Activated naive CD4-positive, alpha-beta T cell treated with anti-CD3 and anti-CD28 coated beads for 36 hours (primary cell): ENCODE measurements at regions of chr11 and their contacts with region 1.

Region 1: GRCh38 chr11:128482512-128483191 is 104.7 kb downstream of the ETS1 start:
- DNase-seq: peak; percentile 72
- H3K4me3 Mint-ChIP-seq: peak overlapping the region; percentile 68
- H3K27ac Mint-ChIP-seq: peak overlapping the region; percentile 95
- H3K4me1 Mint-ChIP-seq: peaks cover 93% of the 10 kb centered on the region
- H3K27me3 Mint-ChIP-seq: no peaks in the 10 kb centered on the region

Region 2: GRCh38 chr11:128501632-128502549 is 19.2 kb after region 1 on chr11:
- CTCF ChIA-PET with region 1: interaction called, 6 read pairs
- intact Hi-C with region 1: loop called (anchors 2 kb)
- DNase-seq: peak; percentile 8
- H3K4me3 Mint-ChIP-seq: peak overlapping the region; percentile 78
- H3K27ac Mint-ChIP-seq: peak overlapping the region; percentile 97
- H3K4me1 Mint-ChIP-seq: peaks cover 96% of the 10 kb centered on the region
- H3K27me3 Mint-ChIP-seq: no peaks in the 10 kb centered on the region